ENCODE measurements at regions of chr2 and their contacts with region 1.

Region 1: GRCh38 chr2:40554668-40555285 is 102.9 kb upstream of the SLC8A1 start:
- DNase-seq: peak in 2 of 4 donors; percentile 37 to 47
- ATAC-seq: peak; percentile 94
- H3K4me3 ChIP-seq: no peak overlapping the region
- H3K27ac ChIP-seq: no peak overlapping the region
- H3K4me1 ChIP-seq: peaks cover 0 to 6% of the 10 kb centered on the region in 2 donors
- H3K27me3 ChIP-seq: no peaks in the 10 kb centered on the region
- CTCF ChIP-seq: peak; percentile 81 to 88

Region 2: GRCh38 chr2:39913648-39914461 is 640.9 kb before region 1 on chr2:
- intact Hi-C with region 1: loop called in 1 of 2 experiments (anchors 10 kb)
- DNase-seq: peak in 2 of 4 donors; percentile 57 to 76
- ATAC-seq: peak; percentile 92
- H3K4me3 ChIP-seq: no peak overlapping the region
- H3K27ac ChIP-seq: no peak overlapping the region
- H3K4me1 ChIP-seq: no peaks in the 10 kb centered on the region
- H3K27me3 ChIP-seq: peaks cover 0 to 4% of the 10 kb centered on the region in 2 donors
- CTCF ChIP-seq: peak; percentile 73 to 75